ENCODE measurements at regions of chr2 and their contacts with region 1.

Region 1: DNA sequence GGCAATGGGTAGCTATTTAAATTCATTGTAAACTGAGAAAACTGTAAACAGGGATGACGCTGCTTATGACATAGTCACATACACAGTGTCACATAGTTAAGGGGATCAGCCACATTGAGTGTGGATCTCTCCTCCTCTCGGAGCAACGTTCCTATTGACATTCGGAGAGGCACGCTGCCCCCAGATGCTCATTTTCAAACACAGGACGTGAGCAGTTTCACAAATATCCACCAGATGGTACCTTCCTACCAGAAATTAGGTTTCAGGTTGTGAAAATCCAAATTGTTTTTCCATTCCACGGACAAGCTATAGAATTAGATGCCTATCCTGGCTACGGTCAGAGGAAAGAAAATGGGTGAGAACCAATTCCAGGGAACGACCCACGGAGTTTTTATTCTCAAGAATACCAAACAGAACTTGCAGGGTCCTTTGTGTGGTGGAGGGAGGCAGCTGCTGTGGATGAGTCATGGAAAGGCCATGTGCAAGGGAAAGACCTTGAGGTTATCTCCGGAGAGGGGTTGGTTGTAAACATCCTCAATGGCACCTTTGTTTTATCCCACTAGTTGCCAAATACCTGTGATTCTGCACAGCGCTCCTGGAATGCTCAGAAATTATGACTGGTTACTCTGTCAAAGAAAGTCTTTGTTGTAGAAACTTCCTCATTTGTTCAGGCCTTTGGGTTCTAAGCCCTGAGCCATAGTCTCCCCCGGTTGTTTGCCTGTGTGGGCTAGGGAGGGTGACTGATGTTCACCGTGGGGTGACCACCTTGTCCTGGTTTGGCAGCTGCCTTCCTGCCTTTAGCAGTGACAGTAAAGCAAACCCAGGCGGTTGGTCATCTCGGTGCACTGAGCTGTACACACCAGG is 88.0 kb downstream of the ACTR3 start:
- DNase-seq: peak; percentile 94
- H3K4me3 ChIP-seq: no peak overlapping the region
- H3K27ac ChIP-seq: peak overlapping the region; percentile 76
- H3K4me1 ChIP-seq: peaks cover 30% of the 10 kb centered on the region
- H3K27me3 ChIP-seq: no peaks in the 10 kb centered on the region
- CTCF ChIP-seq: peak; percentile 56 to 66

Region 2: GRCh38 chr2:114201781-114202180 is 223.9 kb after region 1 on chr2:
- CTCF ChIA-PET with region 1: no interaction called
- dilution Hi-C with region 1: no loop called
- in situ Hi-C with region 1: no loop called
- intact Hi-C with region 1: loop called (anchors 1 kb)
- DNase-seq: no peak
- H3K4me3 ChIP-seq: no peak overlapping the region
- H3K27ac ChIP-seq: no peak overlapping the region
- H3K4me1 ChIP-seq: no peaks in the 10 kb centered on the region
- H3K27me3 ChIP-seq: no peaks in the 10 kb centered on the region
- CTCF ChIP-seq: peak in 1 of 2 donors; percentile 23

Region 3: DNA sequence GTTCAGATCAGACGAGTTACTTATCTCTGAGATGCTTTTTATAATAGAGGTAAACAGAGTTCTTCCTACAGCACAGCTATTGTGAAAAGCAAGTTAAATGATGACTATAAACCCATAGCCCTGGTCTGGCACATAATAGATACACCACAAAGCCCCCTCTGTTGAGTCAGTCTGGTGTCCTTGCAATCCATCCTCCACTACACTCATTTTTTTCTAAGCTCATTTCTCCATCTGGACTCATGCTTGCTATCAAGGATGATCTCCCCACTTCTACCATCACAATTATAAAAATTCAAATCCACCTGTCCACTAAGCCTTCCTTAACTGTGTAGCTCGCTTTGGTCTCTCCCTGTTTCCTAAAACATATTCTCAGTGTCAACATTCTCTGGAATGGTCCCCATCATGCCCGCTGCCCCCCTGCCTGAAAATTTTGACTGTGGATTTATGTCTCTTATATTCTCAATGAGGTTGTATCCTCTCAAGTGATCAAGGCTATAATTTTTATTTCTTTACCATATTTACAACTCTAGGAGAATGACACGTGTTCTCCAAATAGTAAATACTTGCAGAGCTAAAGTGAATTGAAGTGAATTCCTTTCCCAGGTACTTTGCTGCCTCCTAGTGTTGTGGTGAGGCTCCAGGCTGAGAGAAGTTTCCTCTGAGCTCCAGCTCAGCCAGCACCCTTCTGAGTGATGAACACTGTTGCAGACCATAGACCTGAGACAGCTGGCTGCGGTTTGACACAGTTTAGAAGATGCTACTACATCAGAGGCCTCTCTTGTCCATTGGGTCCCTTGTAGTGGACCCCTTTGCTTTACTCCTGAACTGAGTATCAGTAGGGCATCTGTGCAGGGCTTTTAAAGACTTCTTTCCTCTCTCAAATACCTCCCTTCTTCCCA is 573.3 kb after region 1 on chr2:
- CTCF ChIA-PET with region 1: no interaction called
- dilution Hi-C with region 1: no loop called
- in situ Hi-C with region 1: loop called (anchors 10 kb)
- intact Hi-C with region 1: loop called (anchors 1 kb)
- DNase-seq: peak; percentile 35
- H3K4me3 ChIP-seq: no peak overlapping the region
- H3K27ac ChIP-seq: no peak overlapping the region
- H3K4me1 ChIP-seq: no peaks in the 10 kb centered on the region
- H3K27me3 ChIP-seq: no peaks in the 10 kb centered on the region
- CTCF ChIP-seq: peak; percentile 51 to 81